Right ventricle myocardium inferior (tissue), 1 donor: ENCODE measurements at regions of chr1 and their contacts with region 1.

Region 1: DNA sequence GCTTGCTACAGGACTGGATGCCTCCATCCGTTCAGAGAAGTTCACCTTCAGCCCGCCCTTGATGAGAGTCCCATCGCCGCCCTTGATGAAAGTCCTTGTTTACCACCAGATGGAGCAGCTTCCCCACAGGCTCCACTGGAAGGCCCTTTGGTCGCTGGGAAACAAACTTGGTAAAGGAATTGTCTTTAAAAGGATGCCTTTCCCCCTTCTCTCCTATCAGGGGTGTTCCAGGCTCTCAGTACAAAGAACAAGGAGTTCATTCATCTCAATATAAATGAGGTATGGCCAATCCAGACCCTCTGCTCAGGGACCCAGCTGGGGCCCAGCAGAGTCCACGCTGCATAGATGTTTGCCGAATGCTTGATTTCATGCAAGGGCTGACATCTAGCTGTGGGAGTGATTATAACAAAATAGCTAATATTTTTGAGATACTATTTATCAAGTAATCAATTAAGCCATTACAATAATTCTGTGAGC is 50.8 kb downstream of the CAPN9 start:
- DNase-seq: no peak
- ATAC-seq: peak; percentile 91

Region 2: GRCh38 chr1:230917284-230918135 is 119.5 kb after region 1 on chr1:
- intact Hi-C with region 1: loop called (anchors 1 kb)
- DNase-seq: peak; percentile 67
- ATAC-seq: peak; percentile 86